ENCODE measurements at regions of chr11 and their contacts with region 1.

Region 1: DNA sequence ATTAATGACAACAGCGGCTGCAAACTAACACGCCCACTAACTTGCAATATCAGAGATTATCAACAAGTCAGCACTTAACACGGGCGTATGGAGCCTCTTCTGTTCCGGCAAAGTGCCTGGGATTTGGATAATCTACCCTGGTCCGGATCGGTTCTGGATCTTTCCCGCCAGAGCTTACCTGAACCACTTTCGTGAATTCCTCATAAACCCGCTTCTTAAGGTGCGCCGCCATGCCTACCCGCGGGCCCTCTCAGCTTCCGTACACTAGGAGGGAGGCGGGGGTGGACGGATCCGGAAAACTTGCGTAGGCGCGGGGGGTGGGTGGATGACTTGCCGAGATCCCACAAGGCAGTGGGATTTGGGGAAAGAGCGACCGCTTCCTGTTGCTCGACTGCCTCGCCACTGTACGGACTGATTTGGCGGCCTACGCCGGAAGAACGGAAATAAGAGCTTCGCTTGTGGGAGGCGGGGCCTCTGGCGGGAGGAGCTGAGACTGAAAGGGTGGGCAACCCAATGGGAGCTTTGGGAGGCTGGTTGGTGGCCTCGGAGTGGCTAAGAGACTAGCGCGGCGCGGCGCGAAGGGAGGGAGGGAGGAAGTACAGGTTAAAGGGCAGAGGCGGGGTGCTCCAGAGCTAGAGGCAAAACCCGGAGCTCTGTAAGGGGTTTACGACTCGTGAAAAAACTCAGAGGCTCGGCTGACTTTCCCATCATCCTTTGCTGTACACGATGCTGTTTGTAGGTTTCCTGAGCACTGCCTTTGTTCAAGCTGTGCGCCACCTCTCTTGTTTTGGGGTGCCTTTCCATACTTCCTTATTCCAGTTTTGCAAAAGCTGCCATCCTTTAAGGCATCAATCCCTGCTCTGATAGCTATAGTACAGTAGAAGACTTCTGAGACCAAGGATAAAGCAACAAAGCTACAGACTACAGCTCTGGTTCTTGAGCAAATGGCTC is at the start of gene INTS4:
- DNase-seq: peak; percentile 100
- H3K4me3 ChIP-seq: peak within 1 kb of the TSS; percentile 76
- H3K27ac ChIP-seq: peak within 1 kb of the TSS; percentile 75
- H3K4me1 ChIP-seq: peaks cover 20% of the 10 kb centered on the region
- H3K27me3 ChIP-seq: no peaks in the 10 kb centered on the region
- CTCF ChIP-seq: no peak
- total RNA-seq, gene INTS4: 43.9 and 53.8 TPM in 2 replicates

Region 2: GRCh38 chr11:77637345-77638165 is 357.1 kb before region 1 on chr11 and contains the start of gene CLNS1A:
- CTCF ChIA-PET with region 1: no interaction called
- POLR2A ChIA-PET with region 1: no interaction called
- intact Hi-C with region 1: loop called (anchors 2 kb)
- DNase-seq: peak; percentile 84 to 91
- H3K4me3 ChIP-seq: peak within 1 kb of the TSS; percentile 84
- H3K27ac ChIP-seq: peak within 1 kb of the TSS; percentile 65
- H3K4me1 ChIP-seq: peaks cover 19% of the 10 kb centered on the region
- H3K27me3 ChIP-seq: no peaks in the 10 kb centered on the region
- CTCF ChIP-seq: no peak
- total RNA-seq, gene CLNS1A: 190 and 232 TPM in 2 replicates

Region 3: GRCh38 chr11:77747381-77747969 is 247.2 kb before region 1 on chr11:
- CTCF ChIA-PET with region 1: no interaction called
- POLR2A ChIA-PET with region 1: interaction called, 10 read pairs
- intact Hi-C with region 1: no loop called
- DNase-seq: no peak
- H3K4me3 ChIP-seq: no peak overlapping the region
- H3K27ac ChIP-seq: peak overlapping the region; percentile 11; the same call in 1 of the 2 replicates
- H3K4me1 ChIP-seq: peaks cover 10% of the 10 kb centered on the region
- H3K27me3 ChIP-seq: no peaks in the 10 kb centered on the region
- CTCF ChIP-seq: no peak

Region 4: GRCh38 chr11:78022397-78023396 is 28.0 kb after region 1 on chr11 and contains the start of gene KCTD14:
- CTCF ChIA-PET with region 1: no interaction called
- POLR2A ChIA-PET with region 1: no interaction called
- intact Hi-C with region 1: loop called (anchors 1 kb)
- DNase-seq: peak in 1 of 2 experiments; percentile 73
- H3K4me3 ChIP-seq: peak within 1 kb of the TSS; percentile 37; the same call in 1 of the 2 replicates
- H3K27ac ChIP-seq: no peak within 1 kb of the TSS
- H3K4me1 ChIP-seq: peaks cover 17% of the 10 kb centered on the region
- H3K27me3 ChIP-seq: no peaks in the 10 kb centered on the region
- CTCF ChIP-seq: no peak
- total RNA-seq, gene KCTD14: 12.0 and 21.3 TPM in 2 replicates

Region 5: DNA sequence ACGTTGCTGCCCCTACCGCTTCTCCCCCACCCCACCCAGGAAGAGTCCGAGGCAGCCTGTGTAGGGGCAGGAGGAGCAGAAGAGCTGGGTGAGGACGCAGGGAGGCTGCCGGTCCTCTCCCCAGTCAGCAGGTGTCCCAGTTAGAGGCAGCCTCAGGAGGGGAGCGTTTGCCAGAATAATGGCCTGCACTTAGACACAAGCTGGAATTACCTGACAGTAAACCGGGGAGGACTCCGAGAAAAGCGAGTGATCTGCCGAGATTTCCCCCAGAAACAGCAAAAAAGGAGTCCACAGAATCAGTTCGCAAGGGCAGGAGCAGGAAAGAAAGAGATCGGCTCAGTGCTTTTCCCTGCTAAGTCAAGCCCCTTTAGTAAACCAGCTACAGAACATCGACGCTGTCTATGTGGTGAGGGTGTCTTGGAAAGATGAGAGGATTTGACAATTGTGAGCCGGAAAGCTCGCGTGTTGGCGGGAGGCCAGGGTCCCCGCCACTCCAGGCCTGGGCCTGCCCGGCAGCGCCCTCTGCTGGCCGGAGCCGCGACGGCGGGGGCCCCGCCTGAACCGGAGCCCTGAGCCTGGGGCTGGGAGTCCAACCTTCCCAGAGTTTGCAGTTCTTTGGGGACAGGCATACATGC is 51.3 kb after region 1 on chr11:
- CTCF ChIA-PET with region 1: interaction called, 14 read pairs
- POLR2A ChIA-PET with region 1: interaction called, 5 read pairs
- intact Hi-C with region 1: loop called (anchors 1 kb)
- DNase-seq: peak; percentile 56 to 93
- H3K4me3 ChIP-seq: peak overlapping the region; percentile 37; the same call in 1 of the 2 replicates
- H3K27ac ChIP-seq: no peak overlapping the region
- H3K4me1 ChIP-seq: peaks cover 10% of the 10 kb centered on the region
- H3K27me3 ChIP-seq: no peaks in the 10 kb centered on the region
- CTCF ChIP-seq: peak; percentile 100

Region 6: GRCh38 chr11:78094250-78094649 is 99.6 kb after region 1 on chr11:
- CTCF ChIA-PET with region 1: no interaction called
- POLR2A ChIA-PET with region 1: no interaction called
- intact Hi-C with region 1: no loop called
- DNase-seq: no peak
- H3K4me3 ChIP-seq: no peak overlapping the region
- H3K27ac ChIP-seq: no peak overlapping the region
- H3K4me1 ChIP-seq: no peaks in the 10 kb centered on the region
- H3K27me3 ChIP-seq: no peaks in the 10 kb centered on the region
- CTCF ChIP-seq: no peak

Measured in PC-9 (cell line).